ENCODE measurements at regions of chr3 and their contacts with region 1.

Region 1: GRCh38 chr3:182618085-182618732 is 175.1 kb upstream of the ATP11B start:
- DNase-seq: no peak
- H3K4me3 ChIP-seq: no peak overlapping the region
- H3K27ac ChIP-seq: no peak overlapping the region
- H3K4me1 ChIP-seq: no peaks in the 10 kb centered on the region
- H3K27me3 ChIP-seq: no peaks in the 10 kb centered on the region
- CTCF ChIP-seq: peak; percentile 50

Region 2: GRCh38 chr3:181823716-181824115 is 794.5 kb before region 1 on chr3:
- intact Hi-C with region 1: no loop called
- DNase-seq: no peak
- H3K4me3 ChIP-seq: no peak overlapping the region
- H3K27ac ChIP-seq: no peak overlapping the region
- H3K4me1 ChIP-seq: no peaks in the 10 kb centered on the region
- H3K27me3 ChIP-seq: no peaks in the 10 kb centered on the region
- CTCF ChIP-seq: no peak

Region 3: GRCh38 chr3:182258538-182259177 is 359.6 kb before region 1 on chr3:
- intact Hi-C with region 1: loop called (anchors 10 kb)
- DNase-seq: no peak
- H3K4me3 ChIP-seq: no peak overlapping the region
- H3K27ac ChIP-seq: no peak overlapping the region
- H3K4me1 ChIP-seq: no peaks in the 10 kb centered on the region
- H3K27me3 ChIP-seq: no peaks in the 10 kb centered on the region
- CTCF ChIP-seq: peak; percentile 30

Region 4: DNA sequence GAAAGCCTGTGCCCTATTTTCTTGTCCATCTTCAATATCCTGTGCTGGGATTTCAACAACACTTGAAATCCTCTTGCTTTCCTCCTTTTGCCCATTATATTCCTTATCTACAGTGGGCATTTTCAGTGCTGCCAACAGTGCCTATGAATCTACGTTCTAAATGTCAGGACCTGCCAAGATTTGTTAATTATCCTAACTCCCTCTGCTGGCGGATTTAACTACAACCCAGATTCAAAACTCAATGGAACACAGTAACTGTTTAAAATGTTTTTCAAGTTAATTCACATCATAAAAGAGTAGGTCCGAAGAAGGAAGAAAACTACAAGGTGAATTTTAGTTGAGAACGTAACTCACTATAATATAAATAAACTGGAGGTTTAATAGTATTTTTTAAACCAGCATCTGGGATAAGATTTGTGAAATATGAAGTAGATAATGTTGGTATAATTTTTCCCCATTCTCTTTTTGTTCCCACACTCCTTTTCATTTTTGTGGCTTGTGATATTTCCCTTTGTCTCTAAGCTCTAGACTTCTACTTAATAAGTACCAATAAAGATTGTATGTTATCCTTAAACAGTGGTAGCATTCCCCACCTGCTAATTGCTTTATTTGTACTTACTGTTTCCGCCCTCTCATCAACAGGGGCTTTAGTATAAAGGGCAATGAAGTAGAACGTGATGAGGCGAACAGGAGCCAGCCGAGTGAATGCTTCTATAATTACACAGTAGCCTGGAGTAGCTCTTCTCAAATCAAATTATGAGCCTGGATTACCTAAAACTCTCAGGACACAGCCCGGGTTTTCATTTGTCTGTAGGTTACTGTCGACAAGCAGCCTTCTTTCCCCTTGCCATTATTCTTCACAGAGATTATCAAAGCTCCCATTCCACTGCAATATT is 127.4 kb before region 1 on chr3:
- intact Hi-C with region 1: no loop called
- DNase-seq: peak; percentile 23
- H3K4me3 ChIP-seq: no peak overlapping the region
- H3K27ac ChIP-seq: no peak overlapping the region
- H3K4me1 ChIP-seq: no peaks in the 10 kb centered on the region
- H3K27me3 ChIP-seq: no peaks in the 10 kb centered on the region
- CTCF ChIP-seq: peak; percentile 43

Measured in colonic mucosa (tissue), 4 donors.